HepG2 (cell line): ENCODE measurements at regions of chr17 and their contacts with region 1.

Region 1: GRCh38 chr17:48717367-48718226 is 4.7 kb downstream of the PRAC1 start:
- DNase-seq: no peak
- ATAC-seq: no peak
- H3K4me3 ChIP-seq: no peak overlapping the region
- H3K27ac ChIP-seq: no peak overlapping the region
- H3K4me1 ChIP-seq: peaks cover 11% of the 10 kb centered on the region
- H3K27me3 ChIP-seq: peaks cover 6 to 34% of the 10 kb centered on the region in 2 experiments
- CTCF ChIP-seq: no peak
- EP300 ChIP-seq: no peak
- POLR2A ChIP-seq: no peak
- RAD21 ChIP-seq: no peak

Region 2: DNA sequence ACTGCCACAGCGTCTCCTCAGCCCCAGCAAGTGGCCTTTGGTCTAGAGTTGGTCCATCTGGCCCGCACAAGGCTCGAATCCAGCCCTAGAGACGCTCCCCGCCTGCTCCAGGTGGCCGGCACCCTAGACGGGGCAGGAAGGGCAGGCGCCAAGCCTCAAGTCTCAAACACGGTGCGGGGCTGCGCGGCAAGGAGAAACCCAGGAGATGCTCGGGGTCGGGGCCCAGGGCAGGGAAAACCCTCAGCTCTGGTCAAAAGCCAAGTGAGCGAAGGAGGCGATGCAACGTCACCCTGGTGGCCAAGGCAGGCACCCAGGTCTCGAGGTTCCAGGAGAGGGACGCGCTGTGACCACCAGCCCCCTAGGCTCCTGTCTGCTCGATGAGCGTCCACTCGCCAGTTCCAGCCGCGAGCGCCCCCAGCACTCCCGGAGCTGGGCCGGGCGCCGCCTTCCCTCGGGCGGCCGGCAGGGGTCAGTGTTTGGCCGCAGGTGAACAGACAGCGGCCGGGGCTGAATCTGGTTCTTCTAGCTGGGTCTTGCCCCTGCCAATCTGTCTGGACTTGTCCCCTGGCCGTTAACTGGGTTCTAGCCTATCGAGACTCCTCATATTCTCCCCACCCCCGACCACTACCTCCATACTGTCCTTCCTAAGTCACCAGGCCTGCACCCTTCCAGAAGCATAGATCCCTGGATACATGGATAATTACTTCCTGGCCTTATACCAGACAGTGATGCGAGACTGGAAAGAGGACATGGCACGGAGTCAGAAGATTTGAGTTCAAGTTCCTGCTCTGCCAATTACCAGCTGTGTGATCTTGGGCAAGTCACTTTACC is 39.2 kb before region 1 on chr17:
- CTCF ChIA-PET with region 1: no interaction called
- POLR2A ChIA-PET with region 1: no interaction called
- in situ Hi-C with region 1: no loop called
- intact Hi-C with region 1: no loop called
- DNase-seq: peak; percentile 48
- ATAC-seq: peak; percentile 98
- H3K4me3 ChIP-seq: peak overlapping the region in 1 of 3 experiments; percentile 51; a peak in 1 of 6 replicates
- H3K27ac ChIP-seq: no peak overlapping the region
- H3K4me1 ChIP-seq: 0 out of 2 replicates have a peak, but pooled peaks cover 9% of the 10 kb centered on the region
- H3K27me3 ChIP-seq: peaks cover 0 to 26% of the 10 kb centered on the region in 2 experiments; a peak in 3 of 5 replicates
- CTCF ChIP-seq: peak; percentile 98
- EP300 ChIP-seq: no peak
- POLR2A ChIP-seq: no peak
- RAD21 ChIP-seq: peak; percentile 94

Region 3: GRCh38 chr17:48729335-48730239 is 12.0 kb after region 1 on chr17:
- CTCF ChIA-PET with region 1: no interaction called
- POLR2A ChIA-PET with region 1: no interaction called
- in situ Hi-C with region 1: no loop called
- intact Hi-C with region 1: loop called (anchors 1 kb)
- DNase-seq: no peak
- ATAC-seq: no peak
- H3K4me3 ChIP-seq: no peak overlapping the region
- H3K27ac ChIP-seq: no peak overlapping the region
- H3K4me1 ChIP-seq: peaks cover 8% of the 10 kb centered on the region
- H3K27me3 ChIP-seq: peaks cover 18 to 96% of the 10 kb centered on the region in 2 experiments; a peak in 4 of 5 replicates
- CTCF ChIP-seq: no peak
- EP300 ChIP-seq: no peak
- POLR2A ChIP-seq: no peak
- RAD21 ChIP-seq: no peak